B cell (primary cell): ENCODE measurements at regions of chr2 and their contacts with region 1.

Region 1: GRCh38 chr2:12151716-12152115 is 405.3 kb downstream of the LPIN1 start:
- DNase-seq: no peak
- ATAC-seq: no peak
- H3K4me3 ChIP-seq: no peak overlapping the region
- H3K4me3 Mint-ChIP-seq: no peak overlapping the region
- H3K27ac ChIP-seq: no peak overlapping the region
- H3K27ac Mint-ChIP-seq: no peak overlapping the region
- H3K4me1 ChIP-seq: peaks cover 6 to 10% of the 10 kb centered on the region in 2 donors
- H3K4me1 Mint-ChIP-seq: peaks cover 23% of the 10 kb centered on the region
- H3K27me3 ChIP-seq: no peaks in the 10 kb centered on the region
- H3K27me3 Mint-ChIP-seq: no peaks in the 10 kb centered on the region
- CTCF ChIP-seq: no peak

Region 2: GRCh38 chr2:12169721-12170120 is 18.0 kb after region 1 on chr2:
- CTCF ChIA-PET with region 1: interaction called, 6 read pairs
- POLR2A ChIA-PET with region 1: no interaction called
- intact Hi-C with region 1: loop called (anchors 2 kb)
- DNase-seq: no peak
- ATAC-seq: no peak
- H3K4me3 ChIP-seq: no peak overlapping the region
- H3K4me3 Mint-ChIP-seq: peak overlapping the region; percentile 4
- H3K27ac ChIP-seq: no peak overlapping the region
- H3K27ac Mint-ChIP-seq: no peak overlapping the region
- H3K4me1 ChIP-seq: peaks cover 20 to 28% of the 10 kb centered on the region in 2 donors
- H3K4me1 Mint-ChIP-seq: peaks cover 41% of the 10 kb centered on the region
- H3K27me3 ChIP-seq: no peaks in the 10 kb centered on the region
- H3K27me3 Mint-ChIP-seq: no peaks in the 10 kb centered on the region
- CTCF ChIP-seq: no peak

Region 3: GRCh38 chr2:13056259-13056843 is 904.6 kb after region 1 on chr2:
- CTCF ChIA-PET with region 1: no interaction called
- POLR2A ChIA-PET with region 1: no interaction called
- intact Hi-C with region 1: no loop called
- DNase-seq: no peak
- ATAC-seq: no peak
- H3K4me3 ChIP-seq: no peak overlapping the region
- H3K4me3 Mint-ChIP-seq: no peak overlapping the region
- H3K27ac ChIP-seq: no peak overlapping the region
- H3K27ac Mint-ChIP-seq: no peak overlapping the region
- H3K4me1 ChIP-seq: no peaks in the 10 kb centered on the region
- H3K4me1 Mint-ChIP-seq: no peaks in the 10 kb centered on the region
- H3K27me3 ChIP-seq: peaks cover 0 to 8% (median 2%) of the 10 kb centered on the region in 4 experiments
- H3K27me3 Mint-ChIP-seq: peaks cover 18% of the 10 kb centered on the region
- CTCF ChIP-seq: peak; percentile 56